Right ventricle myocardium inferior (tissue), 1 donor: ENCODE measurements at regions of chr13 and their contacts with region 1.

Region 1: GRCh38 chr13:33349986-33350826 is 64.7 kb upstream of the STARD13 start:
- DNase-seq: peak; percentile 77
- ATAC-seq: peak; percentile 85

Region 2: DNA sequence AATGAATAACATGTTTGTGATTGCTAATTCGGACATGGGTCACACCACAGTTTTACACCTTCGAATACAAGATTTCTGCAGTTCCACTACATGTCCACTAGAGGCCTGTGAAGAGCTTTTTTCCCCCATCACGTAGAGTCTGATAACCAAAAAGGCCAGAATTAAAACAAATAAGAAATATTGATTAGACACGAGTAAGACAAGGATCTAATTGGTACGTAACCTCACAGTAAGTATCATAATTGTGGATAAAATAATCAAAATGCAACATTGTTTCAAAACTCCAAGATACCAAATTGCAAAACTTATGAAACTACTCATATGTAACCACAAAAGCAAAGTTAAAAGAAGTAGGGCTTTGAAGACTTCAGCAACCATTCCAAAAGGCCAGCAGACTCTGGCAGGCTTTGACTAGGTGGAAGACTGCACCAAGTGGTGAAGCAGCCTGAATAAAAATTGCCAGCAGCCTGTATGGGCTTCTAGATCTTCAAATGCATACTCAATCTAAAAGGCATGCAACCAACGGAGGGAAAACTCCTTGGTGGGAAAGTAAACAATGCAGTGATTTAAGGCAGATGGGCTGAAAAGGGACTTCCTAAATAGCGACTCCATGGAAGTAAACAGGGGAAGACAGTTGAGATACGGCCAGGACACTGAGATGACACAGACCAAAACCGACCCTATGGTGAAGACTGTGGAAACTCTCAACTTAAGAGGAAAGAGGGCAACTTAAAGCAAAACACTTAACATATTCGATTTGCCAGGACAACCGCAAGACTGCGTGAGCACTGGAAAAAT is 121.4 kb before region 1 on chr13:
- intact Hi-C with region 1: loop called (anchors 5 kb)
- DNase-seq: no peak
- ATAC-seq: peak; percentile 9

Region 3: DNA sequence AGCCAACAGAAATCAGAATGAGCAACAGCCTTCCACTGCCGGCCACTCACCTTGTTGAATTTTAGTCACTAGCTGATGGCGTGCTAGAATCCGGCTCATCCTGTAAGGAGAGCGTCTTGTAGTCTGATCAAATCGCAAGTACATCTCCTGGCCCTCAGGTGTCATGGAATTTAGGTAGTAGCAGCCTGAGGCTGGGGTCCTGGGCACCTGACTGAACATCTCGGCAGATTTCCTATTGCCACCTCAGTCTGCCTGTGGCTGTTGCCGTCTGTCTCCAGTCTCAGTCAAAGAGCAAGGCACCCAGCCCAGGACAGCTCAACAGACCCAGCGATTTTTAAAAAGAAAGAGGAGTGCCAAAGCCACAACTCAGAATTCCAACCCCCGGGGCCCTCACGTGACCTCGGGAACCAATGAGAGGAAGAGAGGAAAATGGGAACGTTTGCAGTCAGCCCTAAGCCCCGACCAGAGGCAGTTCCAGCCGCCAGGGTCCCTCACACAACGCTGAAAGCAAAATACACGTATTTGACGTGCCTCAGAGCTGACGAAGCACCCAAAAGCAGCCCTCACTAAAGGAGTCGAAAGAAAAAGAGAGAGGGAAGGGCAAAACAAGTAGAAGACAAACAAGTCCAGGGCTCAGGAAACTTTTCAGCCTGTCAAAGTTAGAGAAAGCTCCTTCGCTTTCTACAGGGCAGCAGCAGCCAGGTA is 64.6 kb before region 1 on chr13 and contains the start of gene STARD13:
- intact Hi-C with region 1: loop called (anchors 2 kb)
- DNase-seq: peak; percentile 94
- ATAC-seq: peak; percentile 96
- total RNA-seq, gene STARD13: 36.4 TPM

Region 4: GRCh38 chr13:33441015-33441414 is 90.8 kb after region 1 on chr13:
- intact Hi-C with region 1: loop called (anchors 10 kb)
- DNase-seq: no peak
- ATAC-seq: no peak

Region 5: GRCh38 chr13:33494596-33495204 is 144.5 kb after region 1 on chr13:
- intact Hi-C with region 1: loop called (anchors 5 kb)
- DNase-seq: no peak
- ATAC-seq: no peak

Region 6: DNA sequence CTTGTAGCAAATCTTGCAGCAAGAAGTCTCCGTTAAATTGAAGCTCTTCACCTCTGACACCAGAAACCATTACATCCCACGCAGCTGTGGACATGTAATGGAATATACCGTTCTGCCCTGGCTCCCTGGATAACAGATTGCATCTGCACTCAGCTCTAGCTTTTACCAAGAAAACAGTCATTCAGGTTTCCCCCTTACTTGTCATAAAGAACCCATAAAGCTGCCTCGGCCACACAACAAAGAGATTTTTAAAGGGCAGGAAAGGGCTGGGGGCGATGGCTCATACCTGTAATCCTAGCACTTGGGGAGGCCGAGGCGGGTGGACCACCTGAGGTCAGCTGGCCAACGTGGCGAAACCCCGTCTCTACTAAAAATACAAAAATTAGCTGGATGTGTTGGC is 340.1 kb after region 1 on chr13:
- intact Hi-C with region 1: no loop called
- DNase-seq: no peak
- ATAC-seq: no peak